ENCODE measurements at regions of chr19 and their contacts with region 1.

Region 1: GRCh38 chr19:47075179-47075810 is 26.9 kb upstream of the TMEM160 start:
- DNase-seq: no peak
- H3K4me3 Mint-ChIP-seq: no peak overlapping the region
- H3K27ac Mint-ChIP-seq: peak overlapping the region; percentile 45
- H3K4me1 Mint-ChIP-seq: peaks cover 12% of the 10 kb centered on the region
- H3K27me3 Mint-ChIP-seq: no peaks in the 10 kb centered on the region

Region 2: DNA sequence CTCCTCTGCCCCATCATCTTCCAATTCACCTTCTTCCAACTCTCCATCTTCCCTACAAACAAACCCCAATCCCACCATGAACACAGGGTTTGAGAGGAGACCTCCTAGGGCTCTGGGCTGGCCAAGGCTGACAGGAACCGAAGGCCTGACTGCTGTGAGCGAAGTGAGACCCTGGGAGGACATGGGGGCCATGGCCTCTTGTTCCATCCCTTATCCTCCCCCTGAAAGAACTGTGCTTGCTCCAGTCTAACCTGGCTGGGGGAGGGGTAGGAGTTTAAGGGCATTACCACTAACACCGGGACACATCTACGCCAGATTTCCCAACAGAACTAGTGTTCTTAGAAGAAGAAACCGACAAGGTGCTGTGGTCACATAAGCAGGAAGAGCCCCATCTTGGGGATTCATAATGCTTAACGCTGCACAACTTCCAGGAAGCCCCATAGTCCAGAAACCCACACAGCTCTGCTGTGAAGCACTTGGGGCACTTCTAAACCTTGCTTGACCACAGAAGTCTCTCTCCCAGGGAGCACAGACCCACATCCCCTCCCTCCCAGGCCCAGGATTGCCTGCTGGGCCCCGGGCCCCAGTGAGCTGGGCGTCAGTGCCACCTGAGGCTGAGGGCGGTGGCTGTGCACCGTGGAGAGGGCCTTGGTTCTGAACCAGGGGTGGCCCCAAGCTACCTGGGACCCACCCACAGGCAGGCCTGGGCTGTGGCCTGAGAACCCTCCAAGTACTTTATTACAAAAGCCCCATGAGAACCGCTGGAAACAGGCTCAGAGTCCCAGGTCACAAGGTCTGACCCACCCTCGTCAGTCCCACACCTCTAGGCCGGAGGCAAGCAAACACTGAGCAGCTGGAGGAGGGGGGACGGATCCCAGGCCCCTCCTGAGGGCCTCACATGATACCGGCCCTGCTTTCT is 19.5 kb after region 1 on chr19:
- intact Hi-C with region 1: loop called (anchors 2 kb)
- DNase-seq: peak; percentile 88
- H3K4me3 Mint-ChIP-seq: peak overlapping the region; percentile 86
- H3K27ac Mint-ChIP-seq: peak overlapping the region; percentile 94
- H3K4me1 Mint-ChIP-seq: peaks cover 62% of the 10 kb centered on the region
- H3K27me3 Mint-ChIP-seq: no peaks in the 10 kb centered on the region

Region 3: DNA sequence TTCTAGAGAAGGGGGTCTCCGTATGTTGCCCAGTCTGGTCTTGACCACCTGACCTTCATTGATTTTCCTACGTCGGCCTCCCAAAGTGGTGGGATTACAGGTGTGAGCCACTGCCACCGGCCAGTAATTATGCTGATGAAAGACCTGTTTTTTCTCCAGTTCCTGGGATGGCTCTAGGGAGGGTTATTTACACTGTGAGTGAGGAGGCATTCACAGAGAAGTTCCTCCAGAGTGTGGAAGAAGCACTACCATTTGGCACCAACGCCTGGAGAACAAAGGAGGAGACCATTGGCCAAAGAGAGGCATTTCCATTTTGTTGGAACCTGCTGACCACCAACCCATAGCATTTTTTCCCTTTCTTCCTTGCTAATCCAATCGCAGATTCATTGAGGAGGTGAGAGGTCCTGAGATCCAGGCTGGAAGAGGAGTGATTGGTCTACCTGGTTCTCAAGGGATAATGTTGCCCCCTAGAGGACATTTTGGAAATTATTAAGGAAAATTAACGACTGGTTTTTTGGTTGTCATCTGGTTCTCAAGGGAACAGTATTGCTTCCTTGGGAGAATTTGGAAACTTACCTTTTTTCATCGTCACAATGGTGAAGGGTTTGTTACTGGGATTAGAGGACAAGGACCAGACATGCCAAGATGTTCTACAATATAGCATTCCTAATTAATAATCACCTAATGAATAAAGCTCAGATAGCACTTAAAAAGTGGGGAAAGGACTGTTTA is 49.8 kb after region 1 on chr19:
- intact Hi-C with region 1: loop called (anchors 1 kb)
- DNase-seq: peak; percentile 72
- H3K4me3 Mint-ChIP-seq: no peak overlapping the region
- H3K27ac Mint-ChIP-seq: peak overlapping the region; percentile 71
- H3K4me1 Mint-ChIP-seq: peaks cover 5% of the 10 kb centered on the region
- H3K27me3 Mint-ChIP-seq: peaks cover 2% of the 10 kb centered on the region

Measured in activated CD4-positive, alpha-beta T cell treated with anti-CD3 and anti-CD28 coated beads, Interleukin-2, amount 10 ng/mL, durations not matched to agents 24 days and 14 days (primary cell).